ENCODE measurements at regions of chr7 and their contacts with region 1.

Region 1: GRCh38 chr7:138008547-138009349 is 6.9 kb upstream of the CREB3L2 start:
- DNase-seq: peak in 2 of 10 donors; percentile 16 to 32

Region 2: GRCh38 chr7:137606061-137606674 is 402.6 kb before region 1 on chr7:
- intact Hi-C with region 1: loop called (anchors 5 kb)
- DNase-seq: peak in 1 of 10 donors; percentile 35

Region 3: GRCh38 chr7:137656227-137656849 is 352.4 kb before region 1 on chr7:
- intact Hi-C with region 1: loop called (anchors 5 kb)
- DNase-seq: peak; percentile 52 to 96 (median 83)